HEK293 (cell line): ENCODE measurements at regions of chr14 and their contacts with region 1.

Region 1: DNA sequence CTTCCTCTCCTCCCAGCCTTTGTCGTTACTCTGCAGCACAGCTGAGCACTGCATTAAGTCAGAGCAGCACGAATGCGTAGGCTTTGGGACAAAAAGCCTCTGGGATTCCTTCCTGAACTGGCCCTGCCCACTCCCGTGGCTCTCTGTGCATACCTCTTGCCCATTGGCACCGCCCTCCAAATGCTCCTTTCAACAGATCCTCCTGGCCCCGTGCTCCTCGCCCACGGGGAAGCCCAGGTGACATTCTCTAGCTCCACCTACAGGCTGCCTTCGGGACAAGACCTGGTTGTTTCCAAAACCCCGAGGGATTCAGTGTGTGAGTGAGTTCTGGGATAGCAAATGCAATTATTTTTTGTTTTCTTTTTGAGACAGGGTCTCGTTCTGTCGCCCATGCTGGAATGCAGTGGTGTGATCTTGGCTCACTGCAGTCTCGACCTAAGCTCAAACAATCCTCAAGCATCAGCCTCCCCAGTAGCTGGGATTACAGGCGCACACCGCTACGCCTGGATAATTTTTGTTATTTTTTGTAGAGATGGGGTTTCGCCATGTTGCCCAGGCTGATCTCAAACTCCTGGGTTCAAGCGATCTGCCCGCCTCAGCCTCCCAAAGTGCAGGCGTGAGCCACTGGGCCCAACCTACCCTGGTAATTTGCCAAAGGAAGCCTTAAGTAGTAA is 17.9 kb upstream of the TDRD9 start:
- H3K4me3 ChIP-seq: no peak overlapping the region
- H3K27ac ChIP-seq: no peak overlapping the region
- H3K4me1 ChIP-seq: no peaks in the 10 kb centered on the region
- CTCF ChIP-seq: peak; percentile 83

Region 2: GRCh38 chr14:103758059-103758776 is 152.2 kb before region 1 on chr14:
- CTCF ChIA-PET with region 1: no interaction called
- POLR2A ChIA-PET with region 1: no interaction called
- H3K4me3 ChIP-seq: no peak overlapping the region
- H3K27ac ChIP-seq: no peak overlapping the region
- H3K4me1 ChIP-seq: no peaks in the 10 kb centered on the region; the same call in 1 of the 2 replicates
- CTCF ChIP-seq: no peak

Region 3: DNA sequence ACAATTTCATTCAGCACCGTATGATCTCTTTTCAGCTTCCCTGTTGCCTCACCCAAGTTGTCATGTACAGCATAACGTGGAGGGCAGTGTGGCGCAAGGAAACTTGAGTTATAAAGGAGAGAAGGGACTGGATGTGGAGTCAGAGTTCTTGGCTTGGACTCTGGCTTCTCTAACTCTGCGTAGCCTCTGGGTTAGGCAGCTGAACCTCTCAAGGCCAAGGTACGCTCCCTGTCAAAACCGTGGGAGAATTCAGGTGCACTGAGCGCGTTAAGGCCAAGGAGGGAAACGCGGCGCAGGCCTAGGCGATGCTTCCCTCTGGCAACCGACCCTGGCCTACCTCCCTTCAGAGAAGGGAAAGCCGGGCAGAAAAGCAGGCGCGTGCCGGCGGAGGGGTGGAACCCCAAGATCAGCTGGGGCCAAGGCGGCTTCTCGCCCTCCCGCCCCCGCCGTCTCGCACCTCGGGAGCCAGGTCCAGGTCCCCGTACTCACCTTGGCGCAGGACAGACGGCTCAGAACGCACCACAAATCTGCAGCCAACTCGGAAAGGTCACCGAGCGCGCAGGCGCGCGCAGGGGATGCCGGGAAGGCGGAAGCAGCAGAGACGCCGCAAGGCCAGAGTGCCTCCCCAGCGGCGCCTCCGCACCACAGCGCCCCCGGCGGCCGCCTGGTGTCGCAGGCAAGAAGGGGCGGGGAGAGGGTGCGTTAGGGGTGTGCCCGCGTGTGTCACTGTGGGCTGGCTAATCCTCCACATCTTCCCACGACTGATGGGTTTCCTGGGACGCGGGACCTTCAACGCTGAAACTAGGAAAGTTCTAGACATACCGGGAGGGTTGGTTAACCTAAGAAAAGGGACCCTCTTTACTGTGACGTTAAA is 10.8 kb after region 1 on chr14:
- CTCF ChIA-PET with region 1: interaction called, 15 read pairs
- POLR2A ChIA-PET with region 1: no interaction called
- H3K4me3 ChIP-seq: peak overlapping the region; percentile 94
- H3K27ac ChIP-seq: peak overlapping the region; percentile 67; the same call in 1 of the 2 replicates
- H3K4me1 ChIP-seq: peaks cover 2% of the 10 kb centered on the region; the same call in 1 of the 2 replicates
- CTCF ChIP-seq: peak; percentile 98